BJ (cell line): ENCODE measurements at regions of chr9 and their contacts with region 1.

Region 1: GRCh38 chr9:127611899-127612790 is at the start of gene STXBP1:
- DNase-seq: no peak
- H3K4me3 ChIP-seq: peak within 1 kb of the TSS; percentile 86
- H3K27me3 ChIP-seq: no peaks in the 10 kb centered on the region
- CTCF ChIP-seq: no peak
- polyA plus RNA-seq, gene STXBP1: 16.2 and 18.1 TPM in 2 replicates

Region 2: DNA sequence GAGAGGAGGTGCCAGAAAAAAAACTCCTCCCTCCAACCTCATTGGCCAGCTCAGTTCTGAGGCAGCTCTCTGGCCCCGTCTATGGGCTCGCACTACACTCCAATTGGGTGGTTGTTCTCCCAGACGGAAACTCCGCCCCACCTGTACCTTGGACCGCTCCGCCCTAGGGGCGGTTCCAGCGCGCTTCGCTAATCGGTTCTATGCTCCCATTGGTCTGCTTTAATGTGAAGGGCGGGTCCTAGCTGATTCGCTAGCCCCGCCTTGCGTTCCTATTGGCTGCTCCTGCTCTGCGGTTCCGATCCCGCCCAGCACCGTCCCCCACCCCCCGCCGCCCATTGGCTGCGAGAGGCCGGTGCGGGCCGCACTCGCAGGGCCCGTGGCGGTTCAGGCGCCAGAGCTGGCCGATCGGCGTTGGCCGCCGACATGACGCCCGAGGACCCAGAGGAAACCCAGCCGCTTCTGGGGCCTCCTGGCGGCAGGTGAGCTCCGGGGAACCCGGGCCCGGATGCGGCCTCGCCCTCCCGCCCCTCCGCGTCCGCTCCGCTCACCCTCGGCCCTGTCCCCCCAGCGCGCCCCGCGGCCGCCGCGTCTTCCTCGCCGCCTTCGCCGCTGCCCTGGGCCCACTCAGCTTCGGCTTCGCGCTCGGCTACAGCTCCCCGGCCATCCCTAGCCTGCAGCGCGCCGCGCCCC is 215.2 kb before region 1 on chr9 and contains the start of gene SLC2A8:
- CTCF ChIA-PET with region 1: no interaction called
- POLR2A ChIA-PET with region 1: no interaction called
- DNase-seq: peak; percentile 98
- H3K4me3 ChIP-seq: peak within 1 kb of the TSS; percentile 76
- H3K27me3 ChIP-seq: peaks cover 3% of the 10 kb centered on the region
- CTCF ChIP-seq: no peak
- polyA plus RNA-seq, gene SLC2A8: 9.5 and 16.7 TPM in 2 replicates

Region 3: GRCh38 chr9:127770905-127771569 is 158.9 kb after region 1 on chr9:
- CTCF ChIA-PET with region 1: no interaction called
- POLR2A ChIA-PET with region 1: interaction called, 20 read pairs
- DNase-seq: peak; percentile 82
- H3K4me3 ChIP-seq: peak overlapping the region; percentile 42
- H3K27me3 ChIP-seq: peaks cover 6% of the 10 kb centered on the region; the same call in 1 of the 2 replicates
- CTCF ChIP-seq: no peak

Region 4: GRCh38 chr9:127802576-127803443 is 190.7 kb after region 1 on chr9 and contains the start of gene FPGS:
- CTCF ChIA-PET with region 1: no interaction called
- POLR2A ChIA-PET with region 1: no interaction called
- DNase-seq: peak; percentile 33
- H3K4me3 ChIP-seq: peak within 1 kb of the TSS; percentile 44
- H3K27me3 ChIP-seq: no peaks in the 10 kb centered on the region
- CTCF ChIP-seq: no peak
- polyA plus RNA-seq, gene FPGS: 27.9 and 61.9 TPM in 2 replicates